ENCODE measurements at regions of chr10 and their contacts with region 1.

Region 1: GRCh38 chr10:90862908-90863514 is 5.2 kb upstream of the HTR7 start:
- DNase-seq: no peak
- ATAC-seq: peak in 1 of 2 donors; percentile 33

Region 2: DNA sequence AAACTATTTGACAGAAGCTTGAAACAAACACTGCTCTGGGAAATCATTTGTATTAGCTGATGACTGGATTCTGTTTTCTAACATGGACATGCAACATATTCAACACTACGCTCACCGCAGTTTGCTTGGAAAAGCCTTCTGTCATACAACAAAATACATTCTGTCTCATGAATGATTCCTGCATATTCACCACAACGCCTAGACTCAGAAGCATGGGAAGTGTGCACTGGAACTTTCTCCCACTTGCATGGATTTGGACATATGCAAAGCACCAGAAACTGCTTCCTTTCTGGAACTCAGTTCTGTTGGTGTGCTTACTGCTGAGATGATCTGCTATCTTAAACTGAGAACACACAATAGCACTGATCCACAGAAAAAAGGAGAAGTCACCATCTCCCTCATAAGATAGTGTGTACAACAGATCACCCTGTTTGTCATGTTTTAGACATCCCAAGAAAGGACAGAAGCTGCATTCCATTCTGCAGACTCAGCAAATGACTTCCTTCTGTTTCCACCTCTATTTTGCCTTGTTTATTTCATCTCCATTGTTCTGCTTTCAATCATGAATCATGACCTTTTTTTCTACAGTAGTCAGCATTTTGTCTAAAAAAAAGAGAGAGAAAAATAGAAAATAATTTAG is 121.0 kb before region 1 on chr10:
- intact Hi-C with region 1: loop called in 1 of 2 experiments (anchors 10 kb)
- DNase-seq: no peak
- ATAC-seq: peak in 1 of 2 donors; percentile 71

Region 3: GRCh38 chr10:90751107-90751997 is 111.7 kb before region 1 on chr10:
- intact Hi-C with region 1: loop called (anchors 2 to 10 kb)
- DNase-seq: no peak
- ATAC-seq: peak in 1 of 2 donors; percentile 54

Region 4: GRCh38 chr10:91798649-91799611 is 935.9 kb after region 1 on chr10:
- intact Hi-C with region 1: no loop called
- DNase-seq: no peak
- ATAC-seq: peak; percentile 31 to 65